Activated naive CD8-positive, alpha-beta T cell treated with anti-CD3 and anti-CD28 coated beads, Interleukin-2, amount 10 ng/mL, durations not matched to agents 7 days and 5 days (primary cell): ENCODE measurements at regions of chr1 and their contacts with region 1.

Region 1: GRCh38 chr1:9651565-9652378 is at the start of gene PIK3CD:
- DNase-seq: peak; percentile 74
- ATAC-seq: peak; percentile 41
- H3K4me3 Mint-ChIP-seq: peak within 1 kb of the TSS; percentile 97
- H3K27ac Mint-ChIP-seq: peak within 1 kb of the TSS; percentile 97
- H3K4me1 Mint-ChIP-seq: peaks cover 40% of the 10 kb centered on the region
- H3K27me3 Mint-ChIP-seq: no peaks in the 10 kb centered on the region
- total RNA-seq, gene PIK3CD: 250 TPM

Region 2: GRCh38 chr1:9665193-9665592 is 13.4 kb after region 1 on chr1:
- POLR2A ChIA-PET with region 1: interaction called, 623 read pairs
- DNase-seq: no peak
- ATAC-seq: no peak
- H3K4me3 Mint-ChIP-seq: peak overlapping the region; percentile 4
- H3K27ac Mint-ChIP-seq: no peak overlapping the region
- H3K4me1 Mint-ChIP-seq: peaks cover 49% of the 10 kb centered on the region
- H3K27me3 Mint-ChIP-seq: no peaks in the 10 kb centered on the region

Region 3: GRCh38 chr1:9689011-9689706 is 37.4 kb after region 1 on chr1:
- POLR2A ChIA-PET with region 1: interaction called, 83 read pairs
- DNase-seq: peak; percentile 94
- ATAC-seq: peak; percentile 74
- H3K4me3 Mint-ChIP-seq: peak overlapping the region; percentile 82
- H3K27ac Mint-ChIP-seq: peak overlapping the region; percentile 80
- H3K4me1 Mint-ChIP-seq: peaks cover 60% of the 10 kb centered on the region
- H3K27me3 Mint-ChIP-seq: no peaks in the 10 kb centered on the region